Right ventricle myocardium inferior (tissue), 1 donor: ENCODE measurements at regions of chr6 and their contacts with region 1.

Region 1: GRCh38 chr6:56649053-56649769 is 6.5 kb upstream of the DST start:
- DNase-seq: no peak
- ATAC-seq: no peak

Region 2: DNA sequence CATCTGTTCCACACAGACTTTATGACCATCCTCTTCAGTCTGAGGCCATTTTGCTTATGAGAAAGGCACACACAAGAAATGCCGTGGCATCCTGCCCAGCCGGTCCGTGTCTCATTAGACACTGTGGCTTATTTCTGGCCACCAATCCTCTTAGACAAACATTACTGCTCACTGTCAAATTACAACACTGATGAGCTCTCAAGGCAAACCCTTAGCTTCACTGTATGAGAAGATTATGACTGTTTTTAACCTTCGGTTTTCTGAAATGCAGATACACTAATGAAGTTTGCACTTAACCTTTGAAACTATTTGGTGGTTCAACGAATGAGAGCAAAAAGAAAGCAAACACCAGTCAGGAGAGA is 44.0 kb after region 1 on chr6:
- intact Hi-C with region 1: loop called (anchors 2 kb)
- DNase-seq: peak; percentile 96
- ATAC-seq: peak; percentile 87